PC-3 (cell line): ENCODE measurements at regions of chr12 and their contacts with region 1.

Region 1: DNA sequence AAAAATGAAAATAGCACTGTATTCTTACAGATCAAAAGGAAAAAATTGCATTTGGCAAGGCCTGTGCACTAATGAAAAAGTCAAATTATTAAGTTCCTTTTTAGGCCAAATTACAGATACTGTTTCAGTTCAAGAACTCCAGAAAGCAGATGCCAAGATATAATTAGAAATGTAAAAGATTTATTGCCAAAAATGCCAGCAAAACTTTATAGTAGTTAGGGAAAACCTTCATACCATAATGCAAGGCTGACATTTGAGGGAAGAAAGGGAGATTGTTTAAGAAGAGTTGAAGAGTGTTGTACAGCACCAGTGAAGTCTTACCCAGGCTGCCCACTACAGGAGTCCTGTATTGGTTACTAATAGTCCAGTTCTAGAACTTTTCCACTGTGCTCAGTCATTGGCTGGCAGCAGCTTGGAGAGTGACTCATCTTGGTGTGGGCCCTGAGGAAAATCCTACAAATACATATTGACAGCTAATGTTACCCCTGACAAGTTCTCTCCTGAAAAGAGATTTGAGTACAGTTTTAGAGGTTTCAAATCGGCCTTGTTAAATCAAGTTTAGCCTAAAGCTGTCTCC is 600.4 kb downstream of the C12orf50 start:
- DNase-seq: peak; percentile 39
- ATAC-seq: peak; percentile 60
- H3K4me3 ChIP-seq: no peak overlapping the region
- H3K27ac ChIP-seq: peak overlapping the region; percentile 47
- H3K4me1 ChIP-seq: peaks cover 16% of the 10 kb centered on the region
- H3K27me3 ChIP-seq: no peaks in the 10 kb centered on the region
- CTCF ChIP-seq: no peak

Region 2: DNA sequence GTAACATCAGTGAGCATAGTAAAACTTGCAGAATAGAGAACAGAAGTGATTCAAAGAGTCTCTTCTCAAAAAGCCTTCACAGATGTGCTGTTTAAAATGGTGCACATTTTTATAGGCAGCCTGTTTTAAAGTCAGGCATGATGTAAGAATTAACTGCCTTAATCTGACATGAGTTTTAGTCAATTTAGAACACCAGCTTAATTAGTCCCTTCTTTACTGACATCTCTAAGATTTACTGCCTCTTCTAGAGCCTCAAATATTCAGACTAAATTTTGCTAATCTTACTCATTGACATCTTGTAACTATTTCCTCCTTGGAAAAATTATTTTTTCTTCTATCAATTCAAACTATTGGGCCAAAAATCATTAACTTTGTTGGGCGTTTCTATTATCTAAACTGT is 182.1 kb before region 1 on chr12:
- CTCF ChIA-PET with region 1: no interaction called
- POLR2A ChIA-PET with region 1: no interaction called
- intact Hi-C with region 1: loop called (anchors 5 kb)
- DNase-seq: no peak
- ATAC-seq: no peak
- H3K4me3 ChIP-seq: no peak overlapping the region
- H3K27ac ChIP-seq: 0 out of 2 replicates have a peak overlapping the region, but pooled peaks have one; percentile 60
- H3K4me1 ChIP-seq: peaks cover 16% of the 10 kb centered on the region
- H3K27me3 ChIP-seq: no peaks in the 10 kb centered on the region
- CTCF ChIP-seq: no peak

Region 3: GRCh38 chr12:87661786-87662377 is 233.1 kb after region 1 on chr12:
- CTCF ChIA-PET with region 1: no interaction called
- POLR2A ChIA-PET with region 1: no interaction called
- intact Hi-C with region 1: loop called (anchors 5 kb)
- DNase-seq: peak; percentile 17
- ATAC-seq: peak; percentile 84
- H3K4me3 ChIP-seq: peak overlapping the region; percentile 58
- H3K27ac ChIP-seq: no peak overlapping the region
- H3K4me1 ChIP-seq: 0 out of 2 replicates have a peak, but pooled peaks cover 5% of the 10 kb centered on the region
- H3K27me3 ChIP-seq: no peaks in the 10 kb centered on the region
- CTCF ChIP-seq: no peak

Region 4: DNA sequence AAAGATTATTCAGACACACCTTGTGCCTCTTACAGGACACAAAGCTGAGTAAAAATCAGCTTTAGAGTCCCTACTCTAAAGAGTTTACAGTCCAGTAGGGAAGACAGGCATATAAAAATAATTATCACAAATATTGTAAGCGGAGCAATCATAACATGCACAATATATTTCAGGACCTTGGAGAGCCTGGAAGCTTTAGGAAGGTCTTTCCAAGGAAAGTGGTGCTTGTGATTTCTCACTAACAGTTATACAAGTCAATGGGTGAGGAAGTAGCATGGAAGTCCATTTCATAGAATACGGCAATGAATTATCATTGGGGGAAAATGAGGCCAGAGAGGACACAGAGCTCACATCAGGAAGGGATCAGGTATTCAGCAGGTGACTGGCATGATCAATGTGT is 332.2 kb after region 1 on chr12:
- CTCF ChIA-PET with region 1: no interaction called
- POLR2A ChIA-PET with region 1: no interaction called
- intact Hi-C with region 1: no loop called
- DNase-seq: no peak
- ATAC-seq: no peak
- H3K4me3 ChIP-seq: no peak overlapping the region
- H3K27ac ChIP-seq: no peak overlapping the region
- H3K4me1 ChIP-seq: peaks cover 3% of the 10 kb centered on the region; the same call in 1 of the 2 replicates
- H3K27me3 ChIP-seq: no peaks in the 10 kb centered on the region
- CTCF ChIP-seq: no peak